GM12878 (cell line): ENCODE measurements at regions of chr7 and their contacts with region 1.

Region 1: GRCh38 chr7:141220263-141220880 is 146.5 kb downstream of the TMEM178B start:
- DNase-seq: no peak
- ATAC-seq: peak; percentile 87
- H3K4me3 ChIP-seq: no peak overlapping the region
- H3K27ac ChIP-seq: no peak overlapping the region
- H3K4me1 ChIP-seq: no peaks in the 10 kb centered on the region
- H3K27me3 ChIP-seq: no peaks in the 10 kb centered on the region; a peak in 1 of 4 replicates
- CTCF ChIP-seq: peak; percentile 21 to 53 (median 42); a peak in 4 of 6 replicates
- EP300 ChIP-seq: no peak
- POLR2A ChIP-seq: no peak
- RAD21 ChIP-seq: peak; percentile 72

Region 2: DNA sequence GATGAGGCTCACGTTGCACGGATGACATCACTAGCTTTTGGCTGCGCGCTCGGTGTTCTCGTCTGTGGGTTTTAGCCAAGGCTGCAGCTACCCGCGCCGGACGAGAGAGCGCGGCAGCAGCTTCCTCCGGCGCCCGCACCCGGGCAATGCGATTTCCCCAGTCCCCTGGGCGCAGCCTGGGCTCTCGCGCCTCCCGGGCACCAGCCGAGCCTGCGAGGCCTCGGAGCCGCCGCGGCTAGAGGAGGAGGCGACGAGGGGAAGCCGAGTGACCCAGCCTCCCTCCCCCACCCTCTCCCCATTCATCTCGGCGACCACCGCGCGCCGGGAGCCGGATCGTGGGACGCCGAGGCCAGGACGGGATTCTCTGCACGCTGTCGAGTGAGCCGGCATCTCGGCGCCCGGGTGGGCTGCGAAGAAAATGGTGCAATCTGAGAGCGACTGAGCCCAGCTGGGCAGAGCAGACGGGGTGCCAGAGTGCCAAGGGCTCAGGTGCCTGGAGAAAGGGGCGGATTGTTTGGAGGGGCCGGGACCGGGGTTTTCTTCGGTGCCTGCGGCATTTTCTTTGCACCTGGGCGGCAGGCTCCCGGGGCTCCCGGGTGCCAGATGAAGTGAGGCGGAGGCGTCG is 147.7 kb before region 1 on chr7:
- CTCF ChIA-PET with region 1: interaction called, 4 read pairs
- POLR2A ChIA-PET with region 1: no interaction called
- RAD21 ChIA-PET with region 1: no interaction called
- SMC1A ChIA-PET with region 1: interaction called, 9 read pairs
- in situ Hi-C with region 1: no loop called
- intact Hi-C with region 1: loop called (anchors 5 kb)
- DNase-seq: no peak
- ATAC-seq: peak; percentile 48; the same call in 2 of the 3 replicates
- H3K4me3 ChIP-seq: no peak overlapping the region
- H3K27ac ChIP-seq: no peak overlapping the region
- H3K4me1 ChIP-seq: no peaks in the 10 kb centered on the region
- H3K27me3 ChIP-seq: peaks cover 3 to 22% of the 10 kb centered on the region in 2 experiments
- CTCF ChIP-seq: no peak
- EP300 ChIP-seq: no peak
- POLR2A ChIP-seq: no peak
- RAD21 ChIP-seq: no peak

Region 3: DNA sequence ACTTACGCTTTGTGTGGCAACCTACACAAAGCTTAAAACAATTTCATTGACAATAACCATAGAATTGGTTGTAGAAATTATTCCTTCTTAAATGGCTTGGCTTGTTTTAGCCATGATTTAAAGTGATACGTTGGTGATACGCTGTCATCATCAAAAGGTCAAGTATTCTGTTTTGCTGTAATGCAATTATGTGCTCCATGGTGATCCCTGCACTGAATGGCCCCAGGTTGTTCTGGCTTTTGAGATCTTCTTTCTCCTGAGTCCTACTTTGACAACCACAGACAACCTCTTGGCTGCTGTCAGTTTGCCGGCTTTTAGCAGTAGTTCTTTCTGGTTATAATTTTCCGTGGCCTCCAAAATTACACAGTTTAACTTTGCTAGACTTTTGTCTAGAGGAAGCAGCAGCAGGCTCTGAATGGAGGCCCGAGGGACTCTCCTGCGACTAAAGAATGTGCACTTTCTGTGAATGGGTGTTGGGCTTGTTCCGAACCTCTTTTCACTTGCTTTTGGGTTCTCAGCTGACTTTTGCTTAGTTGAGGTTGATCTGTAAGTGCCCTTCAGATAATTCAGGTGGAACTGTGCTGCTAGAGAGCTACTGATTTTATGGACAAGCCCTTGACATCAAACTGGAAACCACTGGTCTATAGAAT is 41.8 kb before region 1 on chr7:
- CTCF ChIA-PET with region 1: no interaction called
- POLR2A ChIA-PET with region 1: no interaction called
- RAD21 ChIA-PET with region 1: no interaction called
- SMC1A ChIA-PET with region 1: no interaction called
- in situ Hi-C with region 1: no loop called
- intact Hi-C with region 1: no loop called
- DNase-seq: no peak
- ATAC-seq: no peak
- H3K4me3 ChIP-seq: no peak overlapping the region
- H3K27ac ChIP-seq: no peak overlapping the region
- H3K4me1 ChIP-seq: no peaks in the 10 kb centered on the region
- H3K27me3 ChIP-seq: no peaks in the 10 kb centered on the region
- CTCF ChIP-seq: no peak
- EP300 ChIP-seq: no peak
- POLR2A ChIP-seq: no peak
- RAD21 ChIP-seq: no peak